ENCODE measurements at regions of chr20 and their contacts with region 1.

Region 1: DNA sequence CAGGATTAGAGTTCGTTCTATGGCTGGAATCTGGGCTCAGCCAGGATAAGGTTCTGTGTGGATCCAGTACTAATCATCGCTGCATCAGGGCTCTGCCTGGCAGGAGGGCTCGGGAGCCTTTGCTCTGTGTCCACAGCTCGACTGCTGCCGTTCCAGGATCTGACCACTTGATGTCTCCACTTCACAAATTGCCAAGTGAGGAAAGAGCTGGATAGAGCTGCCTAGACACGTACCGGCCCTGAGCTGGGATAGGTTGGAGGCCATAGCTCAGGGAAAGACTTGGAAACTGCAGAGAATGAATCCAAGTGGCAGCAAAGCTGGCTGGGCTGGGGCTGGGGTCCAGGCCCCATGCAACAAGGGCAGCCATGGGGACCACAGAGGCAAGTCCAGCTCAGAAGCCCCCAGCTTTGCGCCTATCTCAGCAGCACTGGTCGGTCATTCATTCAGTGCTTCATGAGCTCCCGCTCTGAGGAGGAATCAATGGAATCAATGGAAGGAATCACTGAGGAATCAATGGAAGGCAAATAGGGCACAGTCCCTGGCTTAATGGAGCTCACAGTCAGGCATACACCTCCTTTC is 38.0 kb upstream of the TOP1 start:
- DNase-seq: peak; percentile 54 to 62 (median 56)
- H3K4me3 ChIP-seq: no peak overlapping the region
- H3K4me3 Mint-ChIP-seq: peak overlapping the region in 3 of 8 donors; percentile 21 to 56 (median 34)
- H3K27ac ChIP-seq: no peak overlapping the region
- H3K27ac Mint-ChIP-seq: peak overlapping the region in 6 of 7 donors; percentile 7 to 77 (median 50)
- H3K4me1 ChIP-seq: peaks cover 31% of the 10 kb centered on the region
- H3K4me1 Mint-ChIP-seq: peaks cover 23 to 36% (median 29%) of the 10 kb centered on the region in 4 donors
- H3K27me3 ChIP-seq: no peaks in the 10 kb centered on the region
- H3K27me3 Mint-ChIP-seq: no peaks in the 10 kb centered on the region

Region 2: DNA sequence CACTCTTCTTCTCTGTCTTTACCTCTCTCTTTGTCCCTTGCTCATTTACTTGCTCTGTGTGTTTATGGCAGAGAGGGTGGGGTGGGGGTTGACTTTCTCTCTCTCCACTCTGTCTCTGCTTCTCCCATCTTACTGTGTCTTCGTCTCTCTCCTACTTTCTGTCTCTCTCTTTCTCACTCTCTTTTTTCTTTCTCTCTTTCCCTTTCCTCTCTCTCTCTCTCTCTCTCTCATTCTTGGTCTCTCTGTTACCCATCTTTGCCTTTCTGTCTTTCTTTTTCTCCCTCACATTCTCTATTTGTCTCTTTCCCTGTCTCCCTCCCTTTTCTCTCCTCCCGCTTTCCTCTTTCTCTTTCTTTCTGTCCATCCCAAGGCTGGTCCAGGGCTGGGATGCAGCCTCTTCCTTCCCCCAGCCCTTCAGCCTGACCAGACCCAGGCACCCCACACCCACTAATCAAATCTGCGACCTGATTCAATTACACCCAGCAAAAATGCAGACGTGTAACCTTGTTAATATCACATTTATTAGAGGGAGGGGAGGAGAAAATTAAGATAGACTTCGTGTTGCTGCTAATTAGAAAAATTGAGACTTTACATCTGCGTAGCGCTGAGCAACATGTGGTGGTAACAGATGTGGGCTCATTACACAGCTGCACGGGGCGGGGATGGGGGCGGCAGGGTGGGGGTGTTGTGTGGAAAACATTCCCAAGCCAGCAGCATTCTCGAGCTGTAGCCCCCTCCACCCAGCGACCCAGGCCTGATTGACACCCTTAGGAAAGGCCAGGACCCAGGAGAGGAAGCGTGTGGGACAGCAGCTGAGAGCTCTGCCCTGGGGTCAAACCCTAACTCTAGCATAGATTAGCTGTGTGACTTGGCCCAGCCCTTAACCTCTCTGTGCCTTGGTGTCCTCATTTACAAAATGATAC is 176.7 kb before region 1 on chr20:
- CTCF ChIA-PET with region 1: no interaction called
- POLR2A ChIA-PET with region 1: no interaction called
- intact Hi-C with region 1: no loop called
- DNase-seq: no peak
- H3K4me3 ChIP-seq: no peak overlapping the region
- H3K4me3 Mint-ChIP-seq: no peak overlapping the region
- H3K27ac ChIP-seq: no peak overlapping the region
- H3K27ac Mint-ChIP-seq: peak overlapping the region in 1 of 7 donors; percentile 43
- H3K4me1 ChIP-seq: no peaks in the 10 kb centered on the region
- H3K4me1 Mint-ChIP-seq: no peaks in the 10 kb centered on the region
- H3K27me3 ChIP-seq: no peaks in the 10 kb centered on the region
- H3K27me3 Mint-ChIP-seq: peaks cover 0 to 2% of the 10 kb centered on the region in 2 donors

Region 3: GRCh38 chr20:40902661-40903060 is 88.0 kb before region 1 on chr20:
- CTCF ChIA-PET with region 1: no interaction called
- POLR2A ChIA-PET with region 1: no interaction called
- intact Hi-C with region 1: no loop called
- DNase-seq: no peak
- H3K4me3 ChIP-seq: no peak overlapping the region
- H3K4me3 Mint-ChIP-seq: no peak overlapping the region
- H3K27ac ChIP-seq: no peak overlapping the region
- H3K27ac Mint-ChIP-seq: no peak overlapping the region
- H3K4me1 ChIP-seq: no peaks in the 10 kb centered on the region
- H3K4me1 Mint-ChIP-seq: no peaks in the 10 kb centered on the region
- H3K27me3 ChIP-seq: no peaks in the 10 kb centered on the region
- H3K27me3 Mint-ChIP-seq: peaks cover 0 to under 1% of the 10 kb centered on the region in 2 donors

Region 4: GRCh38 chr20:40970201-40970600 is 20.4 kb before region 1 on chr20:
- CTCF ChIA-PET with region 1: interaction called, 93 read pairs
- POLR2A ChIA-PET with region 1: no interaction called
- intact Hi-C with region 1: loop called (anchors 1 kb)
- DNase-seq: no peak
- H3K4me3 ChIP-seq: no peak overlapping the region
- H3K4me3 Mint-ChIP-seq: peak overlapping the region in 1 of 8 donors; percentile 5
- H3K27ac ChIP-seq: no peak overlapping the region
- H3K27ac Mint-ChIP-seq: peak overlapping the region in 1 of 7 donors; percentile 41
- H3K4me1 ChIP-seq: no peaks in the 10 kb centered on the region
- H3K4me1 Mint-ChIP-seq: peaks cover 6 to 10% (median 8%) of the 10 kb centered on the region in 4 donors
- H3K27me3 ChIP-seq: no peaks in the 10 kb centered on the region
- H3K27me3 Mint-ChIP-seq: no peaks in the 10 kb centered on the region

Region 5: DNA sequence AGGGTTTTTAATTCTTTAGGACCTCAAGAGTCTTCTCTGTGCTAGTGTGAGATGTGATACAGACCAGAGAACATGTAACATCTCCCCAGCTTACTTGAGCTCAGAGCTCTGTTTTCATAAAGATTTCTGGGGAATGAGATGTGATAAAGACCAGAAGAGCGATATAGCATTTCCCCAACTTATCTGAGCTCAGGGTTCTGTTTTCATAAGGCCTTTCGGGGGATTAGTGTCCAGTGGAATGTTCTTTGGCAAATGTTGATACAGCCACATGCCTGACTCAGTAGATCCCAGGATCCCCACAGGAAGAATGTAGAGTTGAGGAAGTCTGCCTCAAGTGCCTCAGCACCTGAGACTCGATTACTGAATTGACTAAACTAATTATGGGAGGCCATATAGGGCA is 19.3 kb after region 1 on chr20:
- CTCF ChIA-PET with region 1: interaction called, 28 read pairs
- POLR2A ChIA-PET with region 1: interaction called, 4 read pairs
- intact Hi-C with region 1: no loop called
- DNase-seq: no peak
- H3K4me3 ChIP-seq: no peak overlapping the region
- H3K4me3 Mint-ChIP-seq: no peak overlapping the region
- H3K27ac ChIP-seq: no peak overlapping the region
- H3K27ac Mint-ChIP-seq: no peak overlapping the region
- H3K4me1 ChIP-seq: peaks cover 8% of the 10 kb centered on the region
- H3K4me1 Mint-ChIP-seq: peaks cover 10 to 23% (median 22%) of the 10 kb centered on the region in 4 donors
- H3K27me3 ChIP-seq: no peaks in the 10 kb centered on the region
- H3K27me3 Mint-ChIP-seq: no peaks in the 10 kb centered on the region

Region 6: GRCh38 chr20:41047975-41048305 is 57.3 kb after region 1 on chr20:
- CTCF ChIA-PET with region 1: interaction called, 23 read pairs
- POLR2A ChIA-PET with region 1: interaction called, 7 read pairs
- intact Hi-C with region 1: no loop called
- DNase-seq: peak in 4 of 5 donors; percentile 46 to 58 (median 54)
- H3K4me3 ChIP-seq: peak overlapping the region; percentile 18 to 39
- H3K4me3 Mint-ChIP-seq: peak overlapping the region; percentile 76 to 92 (median 84)
- H3K27ac ChIP-seq: peak overlapping the region; percentile 57
- H3K27ac Mint-ChIP-seq: peak overlapping the region; percentile 73 to 96 (median 91)
- H3K4me1 ChIP-seq: peaks cover 90% of the 10 kb centered on the region
- H3K4me1 Mint-ChIP-seq: peaks cover 69 to 97% (median 84%) of the 10 kb centered on the region in 4 donors
- H3K27me3 ChIP-seq: no peaks in the 10 kb centered on the region
- H3K27me3 Mint-ChIP-seq: no peaks in the 10 kb centered on the region

Region 7: DNA sequence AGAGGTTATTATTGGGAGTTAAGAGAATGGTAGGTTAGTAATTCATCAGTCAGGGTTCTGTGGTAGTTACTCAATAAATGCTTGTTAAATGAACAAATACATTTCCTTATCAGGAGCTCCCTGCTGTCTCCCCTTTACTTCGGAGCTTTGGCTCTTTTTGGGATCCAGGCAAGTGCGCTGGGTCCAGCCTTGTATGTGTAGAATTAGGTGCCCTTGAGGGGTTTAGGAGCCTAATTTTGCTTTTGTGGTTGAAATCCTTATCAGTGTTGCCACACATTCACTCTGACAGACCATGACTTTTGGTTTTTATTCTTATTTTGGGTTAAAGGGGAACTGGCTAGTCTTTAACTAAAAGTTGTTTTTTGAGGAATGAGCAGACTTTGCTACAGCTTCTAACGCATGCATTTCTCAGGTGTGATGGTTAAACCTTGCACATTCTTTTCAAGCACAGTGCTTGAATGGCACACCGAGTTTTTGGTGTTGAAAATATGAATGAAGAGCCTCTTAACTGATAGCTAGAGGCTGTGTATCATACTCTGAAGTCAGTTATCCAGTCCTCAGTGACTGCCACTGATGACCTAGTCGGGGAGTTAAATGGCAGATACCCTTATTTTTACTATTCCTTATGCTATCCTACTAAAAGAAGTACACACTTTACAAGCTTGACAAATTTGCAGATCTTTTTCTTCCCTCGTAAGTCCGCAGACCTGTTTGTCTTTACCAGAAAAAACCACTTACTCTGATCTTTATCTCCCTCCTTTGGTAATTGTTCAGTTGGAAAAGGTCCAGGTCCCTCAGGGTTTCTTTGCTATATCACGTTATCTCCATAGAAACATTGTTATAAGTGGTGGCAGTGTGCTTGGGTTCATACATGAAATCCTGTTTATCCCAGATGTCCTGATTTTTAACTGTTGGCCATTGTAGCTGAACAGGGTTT is 96.0 kb after region 1 on chr20:
- CTCF ChIA-PET with region 1: interaction called, 374 read pairs
- POLR2A ChIA-PET with region 1: interaction called, 5 read pairs
- intact Hi-C with region 1: loop called (anchors 2 kb)
- DNase-seq: peak in 1 of 5 donors; percentile 17
- H3K4me3 ChIP-seq: no peak overlapping the region
- H3K4me3 Mint-ChIP-seq: peak overlapping the region in 4 of 8 donors; percentile 2 to 37 (median 5)
- H3K27ac ChIP-seq: no peak overlapping the region
- H3K27ac Mint-ChIP-seq: peak overlapping the region; percentile 37 to 86 (median 69)
- H3K4me1 ChIP-seq: peaks cover 19% of the 10 kb centered on the region
- H3K4me1 Mint-ChIP-seq: peaks cover 16 to 37% (median 26%) of the 10 kb centered on the region in 4 donors
- H3K27me3 ChIP-seq: no peaks in the 10 kb centered on the region
- H3K27me3 Mint-ChIP-seq: no peaks in the 10 kb centered on the region

Region 8: GRCh38 chr20:41136680-41137613 is 146.3 kb after region 1 on chr20 and contains the start of gene PLCG1:
- CTCF ChIA-PET with region 1: interaction called, 30 read pairs
- POLR2A ChIA-PET with region 1: interaction called, 3 read pairs
- intact Hi-C with region 1: no loop called
- DNase-seq: peak; percentile 79 to 87 (median 82)
- H3K4me3 ChIP-seq: peak within 1 kb of the TSS; percentile 82
- H3K4me3 Mint-ChIP-seq: peak within 1 kb of the TSS; percentile 93 to 99 (median 96)
- H3K27ac ChIP-seq: peak within 1 kb of the TSS; percentile 84
- H3K27ac Mint-ChIP-seq: peak within 1 kb of the TSS; percentile 89 to 98 (median 95)
- H3K4me1 ChIP-seq: peaks cover 65% of the 10 kb centered on the region
- H3K4me1 Mint-ChIP-seq: peaks cover 43 to 70% (median 62%) of the 10 kb centered on the region in 4 donors
- H3K27me3 ChIP-seq: no peaks in the 10 kb centered on the region
- H3K27me3 Mint-ChIP-seq: no peaks in the 10 kb centered on the region
- total RNA-seq, gene PLCG1: 319 to 320 TPM

Region 9: DNA sequence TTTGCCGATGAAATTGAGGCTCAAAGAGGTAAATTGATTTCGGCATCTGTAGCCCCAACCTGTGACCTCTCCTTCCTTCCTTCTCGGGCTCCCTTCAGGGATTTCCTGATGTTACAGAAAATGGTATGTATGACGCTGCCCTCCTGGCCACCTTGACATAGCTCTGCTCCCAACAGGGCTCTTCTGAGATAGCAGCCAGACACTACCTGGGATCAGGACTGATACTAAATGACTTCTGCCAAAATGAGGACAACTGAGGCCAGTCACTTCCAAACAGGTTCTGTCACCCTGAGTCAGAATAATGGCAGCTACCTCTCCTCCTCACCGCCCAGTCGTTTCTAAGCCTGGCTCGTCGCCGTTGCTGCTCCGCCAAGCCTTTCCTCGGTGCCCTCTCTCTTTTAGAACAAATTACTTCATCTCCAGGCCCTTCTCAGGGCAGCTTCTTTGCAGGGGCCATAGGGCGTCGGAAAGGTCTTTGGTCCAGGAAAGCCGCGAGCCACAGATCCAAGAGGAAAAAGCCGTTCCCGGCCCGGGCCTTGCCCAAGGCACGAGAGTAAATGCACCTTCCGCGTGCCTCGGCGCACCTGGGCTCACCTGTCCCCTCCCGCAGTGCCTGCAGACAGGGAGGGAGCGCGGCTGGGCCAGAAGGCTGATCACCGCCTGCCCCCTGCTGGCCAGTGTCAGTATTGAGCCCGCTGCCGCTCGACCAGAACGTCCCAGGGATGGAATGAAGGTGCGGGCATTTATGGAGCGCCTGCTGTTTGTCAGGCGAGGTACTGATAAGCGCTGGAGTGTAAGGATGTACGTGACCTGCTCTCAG is 349.1 kb after region 1 on chr20:
- CTCF ChIA-PET with region 1: interaction called, 17 read pairs
- POLR2A ChIA-PET with region 1: no interaction called
- intact Hi-C with region 1: loop called (anchors 1 kb)
- DNase-seq: peak; percentile 76 to 86 (median 81)
- H3K4me3 ChIP-seq: peak overlapping the region in 1 of 2 donors; percentile 24
- H3K4me3 Mint-ChIP-seq: peak overlapping the region; percentile 60 to 85 (median 78)
- H3K27ac ChIP-seq: no peak overlapping the region
- H3K27ac Mint-ChIP-seq: peak overlapping the region in 4 of 7 donors; percentile 18 to 62 (median 53)
- H3K4me1 ChIP-seq: peaks cover 10% of the 10 kb centered on the region
- H3K4me1 Mint-ChIP-seq: peaks cover 5 to 13% (median 8%) of the 10 kb centered on the region in 4 donors
- H3K27me3 ChIP-seq: no peaks in the 10 kb centered on the region
- H3K27me3 Mint-ChIP-seq: peaks cover 1 to 7% of the 10 kb centered on the region in 2 donors

Measured in CD4-positive, alpha-beta memory T cell (primary cell).